Spleen (tissue), 13 donors: ENCODE measurements at regions of chr12 and their contacts with region 1.

Region 1: GRCh38 chr12:113030875-113031525 is 25.5 kb upstream of the DTX1 start:
- DNase-seq: no peak
- H3K4me3 ChIP-seq: no peak overlapping the region
- H3K27ac ChIP-seq: no peak overlapping the region
- H3K4me1 ChIP-seq: peaks cover 0 to 9% (median 2%) of the 10 kb centered on the region in 6 donors
- H3K27me3 ChIP-seq: no peaks in the 10 kb centered on the region
- CTCF ChIP-seq: peak; percentile 35 to 86 (median 66)
- POLR2A ChIP-seq: no peak

Region 2: DNA sequence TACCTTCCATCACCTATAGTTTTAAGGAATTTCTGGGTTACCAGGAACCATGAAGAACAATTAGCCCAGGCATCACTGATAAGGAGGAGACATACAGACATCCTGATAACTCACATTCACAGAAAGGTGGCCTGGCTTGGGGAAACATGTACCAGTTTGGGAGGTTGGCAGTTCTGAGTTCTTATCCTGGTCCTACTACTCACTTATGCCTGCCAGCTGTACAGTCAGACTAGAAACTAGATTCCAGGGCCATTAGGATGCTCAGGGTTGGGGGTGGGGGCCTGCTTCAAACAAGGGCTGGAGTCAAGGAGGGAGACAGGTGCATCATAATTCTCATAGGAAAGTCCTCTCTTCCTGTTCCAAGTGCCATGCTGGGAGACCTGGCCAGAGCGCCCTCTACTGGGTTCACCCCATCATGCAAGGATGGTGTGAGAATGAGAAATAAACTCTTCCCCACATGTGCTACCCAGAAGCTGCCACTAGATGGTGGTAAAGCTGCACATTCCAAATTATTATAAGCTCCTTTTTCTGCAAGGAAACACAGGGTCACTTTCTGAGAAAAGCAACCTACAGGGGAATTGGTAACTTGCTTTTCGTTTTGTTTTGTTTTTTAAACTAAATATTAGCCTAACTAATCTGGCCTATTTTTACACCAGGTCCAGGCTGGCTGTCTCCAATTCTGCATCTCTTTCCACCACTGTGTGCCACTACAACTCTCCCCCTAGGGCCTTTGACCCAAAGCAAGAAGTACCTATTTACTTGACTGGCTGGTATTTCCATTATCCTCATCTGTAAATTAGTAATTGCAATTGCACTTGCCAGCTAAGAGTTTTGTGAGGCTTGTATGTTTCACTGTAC is 38.2 kb before region 1 on chr12:
- intact Hi-C with region 1: loop called (anchors 2 kb)
- DNase-seq: no peak
- H3K4me3 ChIP-seq: no peak overlapping the region
- H3K27ac ChIP-seq: peak overlapping the region in 1 of 8 donors; percentile 12
- H3K4me1 ChIP-seq: peaks cover 0 to 23% (median 8%) of the 10 kb centered on the region in 6 donors
- H3K27me3 ChIP-seq: no peaks in the 10 kb centered on the region
- CTCF ChIP-seq: peak; percentile 55 to 94 (median 87)
- POLR2A ChIP-seq: no peak